ENCODE measurements at regions of chr4 and their contacts with region 1.

Region 1: DNA sequence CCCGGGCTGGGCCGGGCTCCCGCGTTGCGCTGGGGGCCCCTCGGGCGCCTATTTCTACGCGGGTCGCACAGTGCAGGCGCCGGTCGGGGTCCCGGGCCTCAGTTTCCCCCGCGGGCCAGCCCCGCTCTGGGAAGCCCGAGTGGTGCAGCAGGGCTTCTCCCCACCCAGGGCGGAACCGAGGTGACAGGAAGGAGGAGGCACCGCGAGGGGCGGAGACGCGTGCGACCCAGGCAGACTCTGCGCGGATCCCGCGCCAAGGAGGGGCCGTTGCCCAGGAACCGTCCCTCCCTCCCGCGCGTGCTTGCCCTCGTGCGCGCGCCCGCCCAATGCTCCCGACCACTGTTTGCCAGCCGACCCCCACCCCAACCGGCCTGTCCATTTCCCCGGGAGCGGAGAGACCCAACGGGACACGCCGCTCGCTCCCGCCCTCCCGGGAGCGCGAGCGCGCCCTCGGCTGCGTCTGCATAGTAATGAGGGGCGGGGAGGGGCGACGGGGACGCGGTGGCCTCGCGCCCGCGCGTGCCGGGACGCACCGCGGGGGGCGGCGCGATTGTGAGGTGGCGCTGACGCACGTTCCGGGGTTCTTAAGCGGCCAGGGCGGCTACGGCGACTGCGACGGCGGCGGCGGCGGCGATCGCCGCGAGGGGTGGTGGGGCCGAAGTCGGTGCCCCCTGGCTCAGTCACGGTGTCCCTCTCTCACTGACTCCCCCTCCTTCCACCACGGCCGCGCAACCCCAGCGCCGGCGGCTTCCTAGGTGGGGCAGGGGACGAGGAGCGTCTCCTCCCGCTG is at the start of gene CPEB2:
- DNase-seq: peak; percentile 95
- ATAC-seq: peak; percentile 72
- H3K4me3 Mint-ChIP-seq: peak within 1 kb of the TSS; percentile 87
- H3K27ac Mint-ChIP-seq: peak within 1 kb of the TSS; percentile 96
- H3K4me1 Mint-ChIP-seq: peaks cover 14% of the 10 kb centered on the region
- H3K27me3 Mint-ChIP-seq: no peaks in the 10 kb centered on the region
- total RNA-seq, gene CPEB2: 6.7 TPM

Region 2: GRCh38 chr4:13484122-13484748 is 1517.8 kb before region 1 on chr4 and contains the start of gene RAB28:
- CTCF ChIA-PET with region 1: no interaction called
- POLR2A ChIA-PET with region 1: no interaction called
- intact Hi-C with region 1: loop called in 1 of 2 experiments (anchors 2 kb)
- DNase-seq: peak; percentile 95
- ATAC-seq: peak; percentile 94
- H3K4me3 Mint-ChIP-seq: peak within 1 kb of the TSS; percentile 93
- H3K27ac Mint-ChIP-seq: peak within 1 kb of the TSS; percentile 99
- H3K4me1 Mint-ChIP-seq: peaks cover 22% of the 10 kb centered on the region
- H3K27me3 Mint-ChIP-seq: peaks cover 8% of the 10 kb centered on the region
- total RNA-seq, gene RAB28: 12.7 to 17.5 TPM

Region 3: DNA sequence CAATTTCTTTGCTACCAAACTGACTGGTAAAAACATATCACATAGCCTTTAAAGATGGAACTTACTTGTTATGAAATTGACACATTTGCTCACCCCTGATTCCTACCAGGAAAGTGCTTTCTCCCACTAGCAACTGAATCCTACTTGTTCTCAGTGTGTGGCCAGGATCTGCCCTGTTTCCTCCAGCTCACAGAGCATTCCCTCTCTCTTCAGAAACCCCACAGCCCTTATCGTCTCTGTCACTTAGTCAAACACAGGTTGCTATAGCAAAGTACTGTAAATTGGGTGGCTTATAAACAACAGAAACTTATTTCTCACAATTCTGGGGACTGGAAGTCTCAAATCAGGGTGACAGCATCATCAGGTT is 1109.3 kb before region 1 on chr4:
- CTCF ChIA-PET with region 1: no interaction called
- POLR2A ChIA-PET with region 1: no interaction called
- intact Hi-C with region 1: loop called in 1 of 2 experiments (anchors 5 kb)
- DNase-seq: no peak
- ATAC-seq: no peak
- H3K4me3 Mint-ChIP-seq: no peak overlapping the region
- H3K27ac Mint-ChIP-seq: peak overlapping the region; percentile 88
- H3K4me1 Mint-ChIP-seq: peaks cover 20% of the 10 kb centered on the region
- H3K27me3 Mint-ChIP-seq: peaks cover 6% of the 10 kb centered on the region

Region 4: GRCh38 chr4:14877246-14878225 is 124.5 kb before region 1 on chr4:
- CTCF ChIA-PET with region 1: no interaction called
- POLR2A ChIA-PET with region 1: no interaction called
- intact Hi-C with region 1: loop called in 1 of 2 experiments (anchors 5 kb)
- DNase-seq: no peak
- ATAC-seq: peak; percentile 12
- H3K4me3 Mint-ChIP-seq: no peak overlapping the region
- H3K27ac Mint-ChIP-seq: no peak overlapping the region
- H3K4me1 Mint-ChIP-seq: peaks cover 18% of the 10 kb centered on the region
- H3K27me3 Mint-ChIP-seq: no peaks in the 10 kb centered on the region

Region 5: DNA sequence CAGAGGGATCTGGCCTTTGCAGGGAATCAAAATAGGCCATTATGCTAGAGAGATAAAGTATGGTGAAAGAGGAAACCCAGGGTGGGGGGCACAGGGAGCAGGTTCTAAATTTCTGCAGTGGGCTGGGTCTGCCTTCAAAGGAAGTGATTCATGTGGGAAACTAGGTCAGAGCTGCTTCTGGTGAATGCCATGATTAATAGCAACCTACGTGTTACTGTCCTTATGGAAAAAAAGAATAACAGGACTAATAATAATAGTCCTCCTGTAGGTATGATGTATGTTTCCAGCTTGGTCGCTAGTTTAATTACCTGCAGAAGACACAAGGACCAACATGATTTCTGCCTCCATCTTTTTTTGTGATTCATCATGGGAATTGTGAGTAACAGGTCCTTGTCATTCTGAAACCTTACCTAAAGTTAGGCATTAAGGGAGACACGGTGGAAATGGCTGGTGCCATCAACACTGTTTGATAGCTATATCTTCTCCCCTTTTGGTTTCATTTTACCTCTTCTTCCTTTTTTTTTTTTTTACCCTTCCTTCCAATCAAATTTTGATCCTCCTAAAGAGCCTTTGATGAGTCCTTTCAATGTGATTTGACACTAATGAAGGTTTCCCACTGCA is 180.6 kb after region 1 on chr4:
- CTCF ChIA-PET with region 1: no interaction called
- POLR2A ChIA-PET with region 1: interaction called, 3 read pairs
- intact Hi-C with region 1: loop called in 1 of 2 experiments (anchors 5 kb)
- DNase-seq: peak; percentile 54
- ATAC-seq: peak; percentile 94
- H3K4me3 Mint-ChIP-seq: peak overlapping the region; percentile 13
- H3K27ac Mint-ChIP-seq: peak overlapping the region; percentile 82
- H3K4me1 Mint-ChIP-seq: peaks cover 15% of the 10 kb centered on the region
- H3K27me3 Mint-ChIP-seq: no peaks in the 10 kb centered on the region

Region 6: DNA sequence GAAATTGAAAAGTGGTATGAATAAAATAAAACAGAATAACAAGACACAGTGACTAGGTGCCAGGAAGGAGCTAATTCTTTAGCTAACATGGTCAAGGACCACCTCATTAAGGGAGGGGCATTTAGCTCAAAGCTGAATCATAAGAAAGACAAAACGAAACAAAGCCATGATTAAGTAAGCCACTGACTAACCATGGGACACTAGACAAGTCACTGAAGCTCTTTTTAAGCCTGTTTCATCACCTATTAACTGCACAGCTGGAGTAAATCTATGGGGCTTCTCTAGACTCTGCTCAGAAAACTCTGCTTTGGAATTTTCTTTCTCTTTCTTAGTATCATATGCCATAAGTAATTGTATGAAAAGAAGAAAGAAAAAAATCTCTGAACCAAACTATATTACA is 376.0 kb after region 1 on chr4:
- CTCF ChIA-PET with region 1: no interaction called
- POLR2A ChIA-PET with region 1: no interaction called
- intact Hi-C with region 1: no loop called
- DNase-seq: no peak
- ATAC-seq: peak; percentile 70
- H3K4me3 Mint-ChIP-seq: no peak overlapping the region
- H3K27ac Mint-ChIP-seq: no peak overlapping the region
- H3K4me1 Mint-ChIP-seq: peaks cover 25% of the 10 kb centered on the region
- H3K27me3 Mint-ChIP-seq: no peaks in the 10 kb centered on the region

Region 7: GRCh38 chr4:15655229-15656037 is 653.4 kb after region 1 on chr4 and contains the start of gene FBXL5:
- CTCF ChIA-PET with region 1: no interaction called
- POLR2A ChIA-PET with region 1: interaction called, 3 read pairs
- intact Hi-C with region 1: loop called (anchors 1 to 2 kb)
- DNase-seq: peak; percentile 90
- ATAC-seq: peak; percentile 76
- H3K4me3 Mint-ChIP-seq: peak within 1 kb of the TSS; percentile 99
- H3K27ac Mint-ChIP-seq: peak within 1 kb of the TSS; percentile 97
- H3K4me1 Mint-ChIP-seq: peaks cover 57% of the 10 kb centered on the region
- H3K27me3 Mint-ChIP-seq: no peaks in the 10 kb centered on the region
- total RNA-seq, gene FBXL5: 20.1 to 29.1 TPM

Region 8: GRCh38 chr4:16225863-16226815 is 1224.1 kb after region 1 on chr4 and contains the start of gene TAPT1:
- CTCF ChIA-PET with region 1: no interaction called
- POLR2A ChIA-PET with region 1: no interaction called
- intact Hi-C with region 1: loop called (anchors 2 to 10 kb)
- DNase-seq: peak; percentile 89
- ATAC-seq: peak; percentile 80
- H3K4me3 Mint-ChIP-seq: peak within 1 kb of the TSS; percentile 90
- H3K27ac Mint-ChIP-seq: peak within 1 kb of the TSS; percentile 98
- H3K4me1 Mint-ChIP-seq: peaks cover 56% of the 10 kb centered on the region
- H3K27me3 Mint-ChIP-seq: no peaks in the 10 kb centered on the region
- total RNA-seq, gene TAPT1: 32.6 to 34.4 TPM

Measured in activated CD4-positive, alpha-beta T cell treated with anti-CD3 and anti-CD28 coated beads for 36 hours (primary cell).